Astrocyte of the cerebellum (primary cell): ENCODE measurements at regions of chr4 and their contacts with region 1.

Region 1: GRCh38 chr4:130110189-130110588 is 1014.2 kb downstream of the C4orf33 start:
- DNase-seq: no peak
- H3K4me3 ChIP-seq: no peak overlapping the region
- CTCF ChIP-seq: no peak

Region 2: DNA sequence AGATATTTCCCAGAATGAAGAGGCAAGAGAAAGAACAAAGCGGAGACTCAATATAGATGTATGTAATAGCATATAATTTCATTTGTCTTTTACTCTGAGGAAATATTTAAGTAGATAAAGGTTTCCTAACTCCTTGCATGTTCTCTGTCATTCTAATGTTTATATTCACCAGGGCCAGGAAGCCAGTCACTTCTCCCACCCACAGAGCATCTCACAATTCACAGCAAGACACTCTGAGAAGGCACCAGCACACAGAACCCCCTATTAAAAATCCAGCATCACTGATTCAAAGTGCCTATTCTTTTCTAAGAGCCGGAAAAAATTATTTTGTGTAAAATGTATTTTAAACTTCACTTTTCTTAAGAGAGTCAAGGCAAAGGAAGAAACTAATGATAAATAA is 87.1 kb before region 1 on chr4:
- in situ Hi-C with region 1: loop called (anchors 5 kb)
- DNase-seq: no peak
- H3K4me3 ChIP-seq: no peak overlapping the region
- CTCF ChIP-seq: no peak

Region 3: GRCh38 chr4:130403221-130403620 is 293.0 kb after region 1 on chr4:
- in situ Hi-C with region 1: loop called (anchors 10 kb)
- DNase-seq: no peak
- H3K4me3 ChIP-seq: no peak overlapping the region
- CTCF ChIP-seq: no peak

Region 4: DNA sequence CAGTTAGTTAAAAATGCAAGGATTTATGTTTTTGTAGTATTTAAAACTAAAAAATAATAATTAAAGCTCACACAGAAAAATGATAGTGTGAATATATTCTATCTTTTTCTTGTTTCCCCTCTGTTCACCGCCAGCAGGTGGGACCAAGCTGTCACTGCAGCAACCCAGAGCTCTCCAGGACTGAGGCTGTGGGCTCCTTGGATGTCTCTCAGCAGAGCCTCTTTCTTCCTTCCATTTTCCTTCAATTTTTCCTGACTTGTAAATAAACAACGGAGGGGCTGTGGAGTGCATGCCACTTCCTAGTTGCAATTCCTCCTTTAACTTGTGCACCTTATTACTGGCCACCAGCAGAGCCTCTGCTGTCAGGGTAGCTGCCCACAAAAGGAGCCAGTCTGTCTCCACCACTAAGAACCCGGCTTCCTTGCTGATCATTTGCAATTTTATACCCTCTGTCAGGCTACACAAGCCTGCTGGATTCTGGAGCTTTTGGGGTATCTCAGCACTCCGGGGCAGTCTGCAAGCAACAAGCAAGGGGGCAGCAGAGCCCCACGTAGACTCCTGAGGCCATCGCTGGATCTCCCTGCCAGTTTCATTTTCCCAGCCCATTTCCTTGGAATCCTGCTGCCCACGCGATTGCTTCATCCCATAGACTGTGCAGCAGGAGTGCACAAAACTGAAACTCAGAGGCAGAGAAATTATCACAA is 453.1 kb after region 1 on chr4:
- in situ Hi-C with region 1: no loop called
- DNase-seq: peak; percentile 68
- H3K4me3 ChIP-seq: peak overlapping the region; percentile 31
- CTCF ChIP-seq: peak; percentile 83